Activated CD4-positive, alpha-beta T cell treated with anti-CD3 and anti-CD28 coated beads for 36 hours (primary cell): ENCODE measurements at regions of chrX and their contacts with region 1.

Region 1: DNA sequence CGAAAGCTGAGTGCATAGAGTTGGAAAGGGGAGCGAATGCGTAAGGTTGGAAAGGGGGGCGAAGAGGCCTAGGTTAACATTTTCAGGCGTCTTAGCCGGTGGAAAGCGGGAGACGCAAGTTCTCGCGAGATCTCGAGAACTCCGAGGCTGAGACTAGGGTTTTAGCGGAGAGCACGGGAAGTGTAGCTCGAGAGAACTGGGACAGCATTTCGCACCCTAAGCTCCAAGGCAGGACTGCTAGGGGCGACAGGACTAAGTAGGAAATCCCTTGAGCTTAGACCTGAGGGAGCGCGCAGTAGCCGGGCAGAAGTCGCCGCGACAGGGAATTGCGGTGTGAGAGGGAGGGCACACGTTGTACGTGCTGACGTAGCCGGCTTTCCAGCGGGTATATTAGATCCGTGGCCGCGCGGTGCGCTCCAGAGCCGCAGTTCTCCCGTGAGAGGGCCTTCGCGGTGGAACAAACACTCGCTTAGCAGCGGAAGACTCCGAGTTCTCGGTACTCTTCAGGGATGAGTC is at the start of gene DDX3X:
- DNase-seq: peak; percentile 89
- ATAC-seq: peak; percentile 62
- H3K4me3 Mint-ChIP-seq: peak within 1 kb of the TSS; percentile 90
- H3K27ac Mint-ChIP-seq: peak within 1 kb of the TSS; percentile 99
- H3K4me1 Mint-ChIP-seq: peaks cover 20% of the 10 kb centered on the region
- H3K27me3 Mint-ChIP-seq: no peaks in the 10 kb centered on the region
- total RNA-seq, gene DDX3X: 118 to 207 TPM

Region 2: GRCh38 chrX:40108959-40109287 is 1224.9 kb before region 1 on chrX:
- CTCF ChIA-PET with region 1: no interaction called
- POLR2A ChIA-PET with region 1: no interaction called
- intact Hi-C with region 1: loop called in 1 of 2 experiments (anchors 10 kb)
- DNase-seq: peak; percentile 83
- ATAC-seq: peak; percentile 60
- H3K4me3 Mint-ChIP-seq: peak overlapping the region; percentile 46
- H3K27ac Mint-ChIP-seq: no peak overlapping the region
- H3K4me1 Mint-ChIP-seq: peaks cover 9% of the 10 kb centered on the region
- H3K27me3 Mint-ChIP-seq: peaks cover 4% of the 10 kb centered on the region

Region 3: DNA sequence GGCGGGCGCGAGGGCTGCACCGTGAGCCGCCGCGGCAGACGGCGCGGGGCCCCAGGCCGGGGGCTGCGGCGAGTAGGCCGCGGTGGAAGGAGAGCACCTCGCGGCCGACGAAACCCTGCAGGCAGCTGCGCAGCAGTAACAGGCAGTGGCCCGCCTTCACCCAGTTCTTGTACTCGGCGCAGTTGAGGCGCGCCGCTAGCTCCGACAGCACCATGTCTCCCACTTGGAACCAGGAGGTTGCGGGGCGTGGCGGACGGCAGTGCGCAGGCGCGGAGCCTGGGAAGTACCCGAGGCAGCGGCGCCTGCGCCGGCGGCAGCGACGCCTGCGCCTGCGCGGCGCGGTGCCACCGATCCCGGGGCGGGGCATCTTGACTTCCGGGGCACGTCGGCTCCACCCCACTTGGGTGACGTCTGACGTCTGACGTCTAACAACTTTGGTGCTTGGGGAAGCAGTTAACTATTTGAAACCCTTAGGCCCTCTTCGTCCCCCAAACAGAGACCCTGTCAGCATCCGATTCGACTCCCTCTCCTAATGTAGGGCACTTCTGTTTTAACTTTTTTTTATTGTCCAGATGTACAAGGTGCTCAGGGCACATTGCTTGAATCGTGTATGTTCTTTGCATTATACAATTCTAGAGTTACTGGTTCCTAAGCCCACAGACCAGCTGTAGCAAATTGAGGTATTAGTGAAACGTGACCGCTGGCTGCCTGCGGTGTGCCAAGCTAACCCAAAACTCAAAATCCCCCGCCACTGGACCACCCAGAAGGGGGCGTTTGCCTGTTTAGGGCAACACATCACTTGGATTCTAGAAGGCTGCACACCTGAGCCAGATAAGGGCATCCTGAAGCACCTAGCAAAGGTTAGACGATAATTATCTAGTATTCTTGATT is 686.2 kb before region 1 on chrX and contains the start of gene CXorf38:
- CTCF ChIA-PET with region 1: no interaction called
- POLR2A ChIA-PET with region 1: no interaction called
- intact Hi-C with region 1: loop called in 1 of 2 experiments (anchors 2 kb)
- DNase-seq: peak; percentile 94
- ATAC-seq: peak; percentile 78
- H3K4me3 Mint-ChIP-seq: peak within 1 kb of the TSS; percentile 97
- H3K27ac Mint-ChIP-seq: peak within 1 kb of the TSS; percentile 95
- H3K4me1 Mint-ChIP-seq: peaks cover 23% of the 10 kb centered on the region
- H3K27me3 Mint-ChIP-seq: no peaks in the 10 kb centered on the region
- total RNA-seq, gene CXorf38: 15.8 to 20.5 TPM

Region 4: DNA sequence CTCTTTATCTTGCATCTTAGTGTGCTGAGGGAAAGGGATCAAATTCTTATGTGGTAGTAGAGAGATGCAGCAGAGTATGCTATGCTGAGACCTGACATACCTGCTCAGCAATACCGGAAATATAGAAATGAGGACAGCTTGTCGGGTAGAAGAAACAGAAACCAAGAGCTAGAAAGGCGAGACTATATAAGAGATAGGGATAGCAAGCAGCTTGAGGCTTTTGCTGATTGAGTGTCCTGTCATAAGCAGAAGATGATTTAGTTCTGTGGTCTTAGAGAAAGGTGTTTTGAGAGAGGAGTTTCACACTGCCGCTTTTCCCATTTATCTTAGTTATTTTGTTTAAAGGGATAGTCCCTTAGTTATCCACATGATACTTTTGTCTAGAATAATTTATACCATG is 216.9 kb before region 1 on chrX:
- CTCF ChIA-PET with region 1: no interaction called
- POLR2A ChIA-PET with region 1: no interaction called
- intact Hi-C with region 1: loop called in 1 of 2 experiments (anchors 10 kb)
- DNase-seq: no peak
- ATAC-seq: peak; percentile 81
- H3K4me3 Mint-ChIP-seq: peak overlapping the region; percentile 49
- H3K27ac Mint-ChIP-seq: peak overlapping the region; percentile 72
- H3K4me1 Mint-ChIP-seq: peaks cover 76% of the 10 kb centered on the region
- H3K27me3 Mint-ChIP-seq: no peaks in the 10 kb centered on the region

Region 5: DNA sequence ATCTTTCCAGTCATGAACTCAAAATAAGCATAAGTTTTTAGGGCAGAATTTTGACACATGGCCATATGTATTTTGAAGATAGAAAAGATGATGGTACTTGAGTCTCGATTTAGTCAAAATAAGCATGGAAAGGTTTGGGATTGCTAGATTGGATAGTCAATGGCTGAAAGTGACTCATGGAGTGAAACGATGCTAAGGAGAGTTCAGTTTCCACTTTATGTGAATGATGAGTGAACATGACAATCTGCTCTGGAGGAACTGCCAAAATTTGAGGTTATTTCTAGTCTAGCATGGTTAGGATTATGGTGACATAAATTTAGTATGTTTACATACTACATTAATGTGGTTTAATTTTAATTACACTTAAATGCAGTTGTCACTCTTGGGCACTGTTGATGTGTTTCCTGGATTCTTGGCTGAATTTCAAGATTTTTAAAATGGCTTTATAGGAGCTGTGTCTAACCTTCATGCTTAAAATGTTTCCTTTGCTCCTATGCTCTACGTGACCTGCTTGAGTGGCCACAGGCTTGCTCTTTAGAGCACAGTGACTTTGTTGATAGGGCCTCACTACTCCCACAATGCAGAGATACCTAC is 17.3 kb after region 1 on chrX:
- CTCF ChIA-PET with region 1: no interaction called
- POLR2A ChIA-PET with region 1: interaction called, 3 read pairs
- intact Hi-C with region 1: loop called in 1 of 2 experiments (anchors 2 kb)
- DNase-seq: no peak
- ATAC-seq: peak; percentile 60
- H3K4me3 Mint-ChIP-seq: no peak overlapping the region
- H3K27ac Mint-ChIP-seq: peak overlapping the region; percentile 70
- H3K4me1 Mint-ChIP-seq: peaks cover 39% of the 10 kb centered on the region
- H3K27me3 Mint-ChIP-seq: no peaks in the 10 kb centered on the region

Region 6: DNA sequence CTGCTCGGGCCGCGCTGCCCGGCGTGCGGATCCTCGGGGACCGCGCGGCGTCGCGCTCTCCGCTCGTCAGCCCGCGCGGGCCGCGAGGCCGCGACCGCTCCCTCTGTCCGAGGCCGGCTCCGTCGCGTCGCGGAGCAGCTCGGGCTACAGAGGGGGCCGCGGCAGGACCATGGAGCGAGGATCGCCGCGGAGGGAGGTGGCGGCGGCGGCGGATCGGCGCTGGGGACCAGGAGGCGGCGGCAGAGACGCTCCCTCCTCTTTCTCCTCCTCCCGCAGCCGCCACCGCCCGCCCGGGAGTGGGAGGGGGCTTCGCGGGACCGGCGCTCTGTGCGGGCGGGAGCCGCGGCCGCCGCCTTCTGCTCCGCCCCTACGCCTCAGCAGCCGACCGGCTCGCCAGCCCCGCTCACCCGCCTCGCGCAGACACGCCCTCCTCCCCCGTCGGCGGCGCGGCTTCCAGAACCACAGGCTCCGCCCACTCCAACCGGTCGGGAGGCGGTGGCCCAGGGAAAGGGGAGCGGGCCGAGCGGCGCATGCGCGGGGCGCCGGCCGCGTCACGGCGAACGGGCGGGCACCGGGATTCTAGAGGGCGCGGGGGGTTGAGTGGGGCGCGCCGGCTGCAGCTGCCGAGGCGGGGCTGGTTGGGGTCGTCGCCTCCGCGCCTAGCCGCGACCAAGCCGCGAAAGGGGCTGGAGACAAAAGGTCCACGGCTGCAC is 589.6 kb after region 1 on chrX and contains the start of gene CASK:
- CTCF ChIA-PET with region 1: no interaction called
- POLR2A ChIA-PET with region 1: no interaction called
- intact Hi-C with region 1: loop called in 1 of 2 experiments (anchors 5 kb)
- DNase-seq: peak; percentile 93
- ATAC-seq: peak; percentile 81
- H3K4me3 Mint-ChIP-seq: peak within 1 kb of the TSS; percentile 80
- H3K27ac Mint-ChIP-seq: peak within 1 kb of the TSS; percentile 77
- H3K4me1 Mint-ChIP-seq: peaks cover 25% of the 10 kb centered on the region
- H3K27me3 Mint-ChIP-seq: no peaks in the 10 kb centered on the region
- total RNA-seq, gene CASK: 14.4 to 15.0 TPM